Ascending aorta (tissue), 2 donors: ENCODE measurements at regions of chr2 and their contacts with region 1.

Region 1: DNA sequence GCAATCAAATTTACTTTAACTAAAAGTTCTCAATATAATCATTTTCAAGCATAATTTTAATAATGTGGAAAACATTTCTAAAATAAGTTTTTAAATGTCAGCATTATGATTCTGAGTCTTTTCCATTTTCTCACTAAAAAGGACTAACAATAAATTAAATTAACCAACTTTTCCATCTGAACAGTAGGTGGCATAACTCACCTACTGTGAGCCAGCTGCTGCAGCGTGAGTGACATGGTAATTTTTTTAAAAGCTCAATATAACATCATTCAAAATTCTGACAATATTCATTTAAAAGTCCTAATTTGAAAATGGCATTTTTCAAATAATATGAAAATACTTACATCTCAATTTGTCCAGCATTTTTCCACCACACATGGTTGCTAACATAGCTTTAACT is 66.5 kb downstream of the DTNB start:
- DNase-seq: no peak
- H3K4me3 ChIP-seq: no peak overlapping the region
- H3K27ac ChIP-seq: no peak overlapping the region
- H3K4me1 ChIP-seq: no peaks in the 10 kb centered on the region
- H3K27me3 ChIP-seq: no peaks in the 10 kb centered on the region
- CTCF ChIP-seq: peak; percentile 51 to 69 (median 68)

Region 2: DNA sequence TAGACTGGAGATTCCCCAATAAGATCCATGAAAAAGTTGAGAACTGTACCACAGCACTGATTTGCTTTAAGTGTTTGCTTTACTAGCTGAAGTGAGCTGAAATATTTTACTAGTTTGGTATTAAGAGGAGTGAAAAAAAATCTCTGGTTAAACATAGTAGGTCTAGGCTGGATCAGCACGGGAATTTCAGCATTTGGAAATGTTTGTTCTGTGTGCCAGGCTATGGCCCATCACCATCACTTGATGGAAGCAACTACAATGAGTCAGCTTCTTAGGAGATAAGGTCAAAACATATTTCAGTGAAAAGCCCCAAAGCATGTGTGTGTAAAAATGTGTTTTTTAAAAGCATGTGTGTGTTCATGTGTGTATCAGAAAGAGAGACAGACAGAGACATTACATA is 133.8 kb before region 1 on chr2:
- intact Hi-C with region 1: no loop called
- DNase-seq: no peak
- H3K4me3 ChIP-seq: no peak overlapping the region
- H3K27ac ChIP-seq: no peak overlapping the region
- H3K4me1 ChIP-seq: no peaks in the 10 kb centered on the region
- H3K27me3 ChIP-seq: no peaks in the 10 kb centered on the region
- CTCF ChIP-seq: no peak

Region 3: DNA sequence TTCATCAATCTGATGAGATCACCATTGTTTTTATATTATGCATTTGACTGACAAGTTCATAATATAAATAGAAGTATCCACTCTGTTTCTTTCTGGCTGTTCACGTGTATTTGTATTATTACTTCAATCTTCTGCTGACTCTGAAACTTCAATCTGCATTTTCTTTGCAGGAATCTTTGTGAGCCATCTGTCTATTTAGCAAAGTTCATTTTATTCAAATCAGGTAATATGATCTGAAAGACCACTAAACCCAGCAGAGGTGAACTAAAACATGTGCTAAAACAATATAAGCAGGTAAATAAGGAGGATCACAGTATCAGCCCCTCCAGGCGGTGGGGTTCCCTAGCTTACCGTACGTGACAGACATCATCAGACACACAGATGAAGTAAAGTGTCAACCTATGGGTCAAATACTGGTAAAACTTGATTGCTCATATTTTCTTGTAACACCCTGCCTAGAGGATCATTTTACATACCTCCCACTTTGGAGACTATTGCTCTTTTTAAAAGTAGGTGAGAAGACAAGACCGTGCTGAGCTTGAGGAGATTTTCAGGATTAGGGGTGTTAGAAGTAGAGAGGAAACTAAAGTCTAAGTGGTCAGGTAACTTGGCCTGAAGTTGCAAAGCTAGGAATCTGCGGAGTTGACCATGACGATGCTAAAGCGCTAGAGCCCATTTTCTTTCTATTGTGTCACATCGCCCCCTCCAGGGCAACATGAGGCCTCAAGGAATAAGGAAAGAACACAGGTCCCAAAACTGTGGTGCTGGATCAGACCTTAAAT is 57.5 kb after region 1 on chr2:
- intact Hi-C with region 1: loop called (anchors 1 kb)
- DNase-seq: peak in 1 of 2 donors; percentile 75
- H3K4me3 ChIP-seq: peak overlapping the region in 1 of 2 donors; percentile 39
- H3K27ac ChIP-seq: no peak overlapping the region
- H3K4me1 ChIP-seq: peaks cover 0 to 3% of the 10 kb centered on the region in 2 donors
- H3K27me3 ChIP-seq: no peaks in the 10 kb centered on the region
- CTCF ChIP-seq: peak; percentile 58 to 77 (median 67)

Region 4: GRCh38 chr2:25697559-25698341 is 90.9 kb after region 1 on chr2:
- intact Hi-C with region 1: loop called (anchors 2 kb)
- DNase-seq: no peak
- H3K4me3 ChIP-seq: no peak overlapping the region
- H3K27ac ChIP-seq: no peak overlapping the region
- H3K4me1 ChIP-seq: no peaks in the 10 kb centered on the region
- H3K27me3 ChIP-seq: no peaks in the 10 kb centered on the region
- CTCF ChIP-seq: no peak

Region 5: DNA sequence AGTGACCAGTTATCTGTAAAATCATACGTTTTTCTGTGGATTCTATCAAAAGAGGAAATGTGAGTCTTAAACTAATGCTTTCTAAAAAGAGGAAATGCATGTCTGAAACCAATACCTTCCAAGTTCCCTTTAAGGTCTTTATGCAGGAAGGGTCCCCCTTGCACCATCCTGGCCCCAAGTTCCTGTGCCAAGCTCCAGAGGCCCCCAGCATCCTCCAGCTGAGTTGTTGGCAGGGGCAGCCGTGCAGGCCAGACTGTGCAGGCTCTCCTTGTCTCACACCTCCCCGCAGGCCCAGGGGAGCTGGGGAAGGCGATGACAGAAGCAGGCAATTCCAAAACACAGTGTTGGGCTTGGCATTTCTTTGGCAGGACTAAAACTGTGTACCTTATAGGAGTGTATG is 1280.3 kb after region 1 on chr2:
- intact Hi-C with region 1: no loop called
- DNase-seq: no peak
- H3K4me3 ChIP-seq: no peak overlapping the region
- H3K27ac ChIP-seq: no peak overlapping the region
- H3K4me1 ChIP-seq: no peaks in the 10 kb centered on the region
- H3K27me3 ChIP-seq: no peaks in the 10 kb centered on the region
- CTCF ChIP-seq: no peak